ENCODE measurements at regions of chr15 and their contacts with region 1.

Region 1: DNA sequence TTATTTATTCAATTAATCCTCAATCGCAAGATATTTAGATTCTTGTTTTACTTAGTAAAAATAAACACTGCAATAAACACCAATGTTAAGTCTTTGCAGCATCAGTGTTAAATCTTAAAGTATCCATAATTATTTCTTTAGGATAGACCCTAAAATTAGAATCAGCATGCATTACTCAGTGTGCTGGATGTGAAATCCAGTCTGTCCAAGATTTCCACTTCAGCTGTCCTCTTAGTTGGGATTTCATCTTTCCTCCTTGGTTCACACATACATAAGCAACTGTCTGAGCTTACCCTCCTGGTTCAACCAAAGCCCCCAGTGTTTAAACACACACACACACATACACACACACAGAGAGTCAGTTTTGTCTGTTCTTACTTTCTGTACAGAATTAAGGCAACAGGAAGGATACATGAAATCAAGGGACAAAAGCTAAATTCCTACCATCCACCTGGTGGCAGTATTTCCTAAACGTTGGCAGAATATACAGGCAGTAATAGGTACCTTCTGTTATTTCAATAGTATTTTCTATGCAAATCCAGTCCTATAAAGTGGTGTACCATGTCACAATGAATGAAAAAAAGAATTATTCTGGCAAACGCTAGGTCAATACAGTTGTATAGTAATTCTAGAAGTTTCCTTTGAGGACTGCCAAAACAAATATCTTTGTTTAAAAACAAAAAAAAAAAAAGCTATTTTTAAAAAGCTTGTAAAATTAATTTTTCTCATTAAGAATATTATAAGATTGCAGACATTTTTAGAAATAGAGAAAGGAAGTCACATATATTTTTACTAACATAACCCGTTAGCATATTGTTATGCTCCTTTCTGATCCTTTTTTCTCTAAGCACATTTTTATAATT is 27.3 kb upstream of the DMXL2 start:
- DNase-seq: peak; percentile 64
- CTCF ChIP-seq: peak; percentile 68

Region 2: DNA sequence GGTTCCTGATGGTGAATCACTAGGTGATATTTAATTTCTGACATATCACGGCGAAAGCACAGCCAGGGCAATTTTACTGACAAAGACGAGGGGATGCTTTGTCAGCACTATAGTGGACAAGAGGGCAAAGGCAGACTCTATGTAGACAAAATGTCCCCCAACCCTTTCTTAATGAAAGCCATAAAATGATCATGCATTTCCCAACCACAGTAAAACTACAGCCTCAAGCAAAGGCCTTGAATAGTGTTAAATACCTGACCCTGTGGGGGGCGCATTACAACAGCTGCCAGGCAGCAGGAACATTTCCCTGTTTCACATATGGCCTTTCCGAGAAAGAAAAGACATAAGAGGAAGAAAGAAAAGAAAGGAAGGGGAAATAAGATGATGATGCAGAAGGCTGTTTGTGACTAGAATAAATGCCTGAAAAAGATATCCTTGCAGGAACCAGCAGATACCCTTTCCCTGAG is 258.9 kb before region 1 on chr15:
- CTCF ChIA-PET with region 1: no interaction called
- POLR2A ChIA-PET with region 1: no interaction called
- DNase-seq: no peak
- CTCF ChIP-seq: no peak

Region 3: GRCh38 chr15:51622604-51623370 is 27.1 kb before region 1 on chr15 and contains the start of gene DMXL2:
- CTCF ChIA-PET with region 1: interaction called, 11 read pairs
- POLR2A ChIA-PET with region 1: no interaction called
- DNase-seq: peak; percentile 79
- CTCF ChIP-seq: no peak

Region 4: GRCh38 chr15:51672155-51672687 is 22.3 kb after region 1 on chr15:
- CTCF ChIA-PET with region 1: interaction called, 10 read pairs
- POLR2A ChIA-PET with region 1: no interaction called
- DNase-seq: no peak
- CTCF ChIP-seq: no peak

Region 5: GRCh38 chr15:51759557-51760070 is 109.7 kb after region 1 on chr15:
- CTCF ChIA-PET with region 1: interaction called, 16 read pairs
- POLR2A ChIA-PET with region 1: no interaction called
- DNase-seq: no peak
- CTCF ChIP-seq: peak; percentile 24

Region 6: GRCh38 chr15:51782357-51782896 is 132.5 kb after region 1 on chr15:
- CTCF ChIA-PET with region 1: interaction called, 168 read pairs
- POLR2A ChIA-PET with region 1: no interaction called
- DNase-seq: no peak
- CTCF ChIP-seq: no peak

Region 7: GRCh38 chr15:52124270-52124880 is 474.5 kb after region 1 on chr15:
- CTCF ChIA-PET with region 1: no interaction called
- POLR2A ChIA-PET with region 1: no interaction called
- DNase-seq: no peak
- CTCF ChIP-seq: no peak